Right cardiac atrium (tissue), 5 donors: ENCODE measurements at regions of chr10 and their contacts with region 1.

Region 1: DNA sequence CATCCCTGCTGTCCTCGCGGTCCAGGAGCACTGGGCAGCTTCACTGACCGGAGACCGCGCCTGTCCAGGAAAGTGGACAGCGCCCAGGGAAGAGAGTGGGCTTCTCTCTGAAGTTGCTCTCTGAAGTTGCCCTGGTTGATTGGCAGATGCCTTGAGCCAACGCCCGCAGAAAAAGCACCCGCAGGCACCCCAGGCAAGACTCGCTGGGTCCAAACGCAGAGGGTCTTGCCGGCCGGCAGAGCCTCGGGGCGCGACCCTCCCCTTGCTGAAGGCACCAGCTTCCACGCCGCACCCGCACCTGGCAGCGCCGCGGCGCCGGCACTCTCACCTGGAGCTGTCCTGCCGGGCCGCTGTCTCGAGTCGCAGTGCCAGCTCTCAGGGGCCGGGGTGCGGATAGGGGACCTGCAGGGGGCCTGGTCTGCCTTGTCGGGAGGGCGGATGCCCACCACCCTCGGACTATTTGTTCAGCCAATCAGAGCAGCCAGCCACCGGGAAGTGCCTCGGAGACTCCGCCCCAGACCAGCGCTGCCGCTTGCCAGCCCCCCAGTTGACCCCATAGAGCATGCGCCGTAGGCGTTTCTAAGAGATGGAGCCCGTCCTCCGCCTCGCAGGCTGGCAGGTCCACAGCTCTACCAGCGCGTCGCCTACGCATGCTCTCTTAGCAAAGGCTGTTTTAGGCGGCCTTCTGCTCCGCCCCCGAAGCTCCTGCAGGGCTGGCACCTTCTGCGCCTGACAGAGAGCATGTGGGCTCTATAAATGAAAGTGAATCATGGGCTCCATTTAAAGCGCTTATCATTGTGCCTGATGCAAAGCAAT is at the start of gene LIPA:
- DNase-seq: peak; percentile 98 to 99 (median 99)
- ATAC-seq: peak; percentile 99
- H3K4me3 ChIP-seq: peak within 1 kb of the TSS; percentile 93
- H3K27ac ChIP-seq: peak within 1 kb of the TSS; percentile 86
- H3K4me1 ChIP-seq: peaks cover 1% of the 10 kb centered on the region
- H3K27me3 ChIP-seq: no peaks in the 10 kb centered on the region
- total RNA-seq, gene LIPA: 22.7 to 34.7 (median 26.0) TPM

Region 2: GRCh38 chr10:89369156-89370105 is 117.8 kb after region 1 on chr10:
- intact Hi-C with region 1: loop called in 2 of 4 experiments (anchors 5 to 10 kb)
- DNase-seq: no peak
- ATAC-seq: peak; percentile 38 to 55
- H3K4me3 ChIP-seq: no peak overlapping the region
- H3K27ac ChIP-seq: peak overlapping the region; percentile 6
- H3K4me1 ChIP-seq: peaks cover 10% of the 10 kb centered on the region
- H3K27me3 ChIP-seq: no peaks in the 10 kb centered on the region

Region 3: DNA sequence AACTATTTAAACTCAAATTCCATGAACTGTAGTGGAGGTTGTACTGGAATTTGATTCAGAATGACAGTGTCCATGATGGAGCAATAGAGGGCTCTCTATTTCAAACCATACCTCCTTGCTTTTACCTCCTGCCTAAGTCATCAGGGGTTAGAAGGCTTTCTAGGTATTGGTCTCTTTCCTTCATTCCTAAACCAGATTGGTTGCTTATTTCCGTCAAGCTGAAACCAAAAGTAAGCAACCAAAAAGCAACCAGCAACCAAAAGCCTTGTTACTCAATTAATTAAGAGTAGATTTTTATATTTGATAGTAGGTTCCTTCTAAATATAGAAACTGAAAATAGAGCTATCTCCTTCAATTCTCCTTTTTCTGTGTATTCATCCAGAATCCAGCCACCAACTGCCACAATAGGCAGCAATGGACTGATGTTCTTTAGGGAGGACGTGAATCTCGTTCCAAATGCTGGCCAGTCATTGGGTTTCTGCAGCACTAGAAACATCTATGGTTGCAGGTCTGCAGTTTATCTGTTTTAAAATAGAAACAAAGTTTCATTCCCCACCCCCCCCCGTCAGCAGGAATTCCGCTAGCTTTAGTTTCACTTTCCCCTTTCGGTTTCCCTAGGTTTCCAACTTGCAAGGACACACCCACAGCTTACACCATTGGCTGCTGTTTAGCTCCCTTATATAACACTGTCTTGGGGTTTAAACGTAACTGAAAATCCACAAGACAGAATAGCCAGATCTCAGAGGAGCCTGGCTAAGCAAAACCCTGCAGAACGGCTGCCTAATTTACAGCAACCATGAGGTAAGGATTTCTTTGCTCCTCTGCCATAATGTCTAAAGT is 140.5 kb after region 1 on chr10 and contains the start of gene IFIT1:
- intact Hi-C with region 1: loop called in 1 of 4 experiments (anchors 5 kb)
- DNase-seq: peak in 1 of 3 donors; percentile 57
- ATAC-seq: peak; percentile 94 to 95
- H3K4me3 ChIP-seq: peak within 1 kb of the TSS; percentile 91
- H3K27ac ChIP-seq: peak within 1 kb of the TSS; percentile 95
- H3K4me1 ChIP-seq: peaks cover 2% of the 10 kb centered on the region
- H3K27me3 ChIP-seq: no peaks in the 10 kb centered on the region
- total RNA-seq, gene IFIT1: 12.6 to 41.2 (median 29.0) TPM